HepG2 (cell line): ENCODE measurements at regions of chr4 and their contacts with region 1.

Region 1: GRCh38 chr4:7838136-7838782 is 101.4 kb downstream of the AFAP1 start:
- DNase-seq: no peak
- ATAC-seq: no peak
- H3K4me3 ChIP-seq: no peak overlapping the region
- H3K27ac ChIP-seq: no peak overlapping the region
- H3K4me1 ChIP-seq: peaks cover 8% of the 10 kb centered on the region
- H3K27me3 ChIP-seq: no peaks in the 10 kb centered on the region
- CTCF ChIP-seq: no peak
- EP300 ChIP-seq: no peak
- POLR2A ChIP-seq: no peak
- RAD21 ChIP-seq: no peak

Region 2: DNA sequence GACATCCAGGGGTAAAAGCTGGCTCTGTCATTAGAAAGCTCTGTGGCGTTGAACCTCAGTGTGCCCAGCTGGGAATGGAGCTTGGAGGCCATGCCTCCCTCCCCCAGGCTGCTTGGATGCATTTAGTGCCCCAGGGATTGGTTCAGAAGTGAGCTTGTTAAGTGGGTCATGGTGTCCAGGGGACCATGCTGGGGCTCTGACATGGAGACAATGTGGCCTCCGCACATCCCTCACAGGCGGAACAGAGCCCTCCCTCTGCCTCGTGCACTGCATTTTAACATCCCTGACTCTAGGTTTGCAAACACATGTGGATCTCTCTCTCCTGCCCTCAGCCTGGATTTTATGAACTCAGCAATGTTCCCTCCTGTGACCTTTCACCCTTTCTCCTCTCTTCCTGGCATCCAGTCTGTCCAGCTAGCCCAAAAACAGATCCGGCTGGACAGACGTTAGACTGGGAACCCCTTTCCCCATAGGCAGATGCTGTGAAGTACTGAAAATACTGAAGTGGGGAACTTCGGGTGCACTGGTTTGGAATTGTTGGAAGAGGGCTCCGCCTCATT is 564.4 kb before region 1 on chr4:
- CTCF ChIA-PET with region 1: no interaction called
- POLR2A ChIA-PET with region 1: no interaction called
- in situ Hi-C with region 1: no loop called
- intact Hi-C with region 1: loop called (anchors 5 kb)
- DNase-seq: no peak
- ATAC-seq: no peak
- H3K4me3 ChIP-seq: no peak overlapping the region
- H3K27ac ChIP-seq: no peak overlapping the region
- H3K4me1 ChIP-seq: no peaks in the 10 kb centered on the region
- H3K27me3 ChIP-seq: peaks cover 7 to 87% of the 10 kb centered on the region in 2 experiments
- CTCF ChIP-seq: no peak
- EP300 ChIP-seq: no peak
- POLR2A ChIP-seq: no peak
- RAD21 ChIP-seq: no peak